PC-3 (cell line): ENCODE measurements at regions of chr2 and their contacts with region 1.

Region 1: DNA sequence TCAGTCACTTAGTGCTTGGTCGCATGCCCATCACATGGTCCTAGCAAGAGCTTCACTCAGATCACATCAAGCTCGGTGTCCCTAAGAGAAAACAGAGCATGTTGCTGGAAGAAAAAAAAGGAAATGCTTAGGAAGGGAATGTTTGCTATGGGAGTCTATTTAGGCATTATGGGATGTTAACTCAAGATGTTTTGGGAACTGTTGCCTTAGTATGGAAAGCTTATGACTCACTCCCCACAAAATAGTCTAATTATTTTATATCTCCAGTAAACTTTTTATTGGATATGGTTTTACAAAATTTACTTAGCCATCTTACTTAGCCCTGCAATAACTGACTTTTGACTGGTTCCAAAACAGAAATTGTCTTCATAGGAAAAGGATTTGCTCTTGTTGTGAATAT is 439.5 kb upstream of the ZEB2 start:
- DNase-seq: peak; percentile 62
- ATAC-seq: peak; percentile 93
- H3K4me3 ChIP-seq: no peak overlapping the region
- H3K27ac ChIP-seq: peak overlapping the region; percentile 50
- H3K4me1 ChIP-seq: peaks cover 10% of the 10 kb centered on the region
- H3K27me3 ChIP-seq: no peaks in the 10 kb centered on the region
- CTCF ChIP-seq: no peak

Region 2: GRCh38 chr2:144865670-144866069 is 93.7 kb before region 1 on chr2:
- CTCF ChIA-PET with region 1: no interaction called
- POLR2A ChIA-PET with region 1: no interaction called
- intact Hi-C with region 1: no loop called
- DNase-seq: no peak
- ATAC-seq: no peak
- H3K4me3 ChIP-seq: no peak overlapping the region
- H3K27ac ChIP-seq: no peak overlapping the region
- H3K4me1 ChIP-seq: no peaks in the 10 kb centered on the region
- H3K27me3 ChIP-seq: no peaks in the 10 kb centered on the region
- CTCF ChIP-seq: no peak

Region 3: GRCh38 chr2:144990661-144991060 is 31.2 kb after region 1 on chr2:
- CTCF ChIA-PET with region 1: no interaction called
- POLR2A ChIA-PET with region 1: no interaction called
- intact Hi-C with region 1: loop called (anchors 5 kb)
- DNase-seq: no peak
- ATAC-seq: no peak
- H3K4me3 ChIP-seq: no peak overlapping the region
- H3K27ac ChIP-seq: no peak overlapping the region
- H3K4me1 ChIP-seq: peaks cover 4% of the 10 kb centered on the region
- H3K27me3 ChIP-seq: no peaks in the 10 kb centered on the region
- CTCF ChIP-seq: no peak